ENCODE measurements at regions of chr2 and their contacts with region 1.

Region 1: DNA sequence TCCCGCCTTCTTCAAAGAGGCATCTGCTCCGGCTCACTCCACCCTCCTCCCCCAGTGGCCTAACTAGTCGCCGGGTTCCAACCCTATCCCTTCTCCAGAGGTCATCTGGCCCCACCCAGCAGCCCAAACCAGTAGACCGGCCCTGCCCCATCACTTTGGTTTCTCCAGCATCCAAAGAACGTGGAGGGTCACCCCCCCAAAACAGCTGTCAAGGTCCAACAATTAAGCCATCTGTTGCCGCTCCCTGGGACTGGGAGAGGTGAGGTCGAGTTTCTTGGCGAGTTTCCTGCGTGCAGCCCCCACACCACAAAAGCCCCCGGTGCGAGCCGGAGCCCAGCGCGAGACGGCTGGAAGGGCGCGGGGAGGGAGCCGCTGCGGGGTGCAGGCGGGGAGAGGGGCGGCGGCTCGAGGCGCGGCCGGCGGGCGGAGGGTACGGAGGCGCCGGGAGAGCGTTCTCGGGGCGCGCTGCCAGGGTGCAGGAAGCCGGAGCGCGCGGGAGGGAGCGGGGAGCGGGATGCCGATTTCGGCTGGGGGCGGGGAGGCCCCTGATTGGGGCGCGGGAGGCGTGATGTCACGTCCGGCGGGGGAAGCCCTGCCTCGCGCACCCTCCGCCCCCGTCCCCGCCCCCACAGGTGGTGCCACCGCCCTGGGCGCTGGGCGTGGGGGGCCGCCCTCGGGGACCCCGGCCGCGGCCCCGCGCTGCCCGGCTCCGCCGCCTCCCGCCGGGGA is 571 bp upstream of the GPC1 start:
- DNase-seq: peak; percentile 77 to 95 (median 88)
- H3K4me3 ChIP-seq: peak overlapping the region; percentile 44 to 89 (median 75)
- H3K27ac ChIP-seq: peak overlapping the region in 58 of 59 donors; percentile 41 to 93 (median 83)
- H3K27me3 ChIP-seq: no peaks in the 10 kb centered on the region
- CTCF ChIP-seq: peak in 3 of 56 donors; percentile 5 to 22 (median 12)

Region 2: GRCh38 chr2:240051697-240052096 is 383.2 kb before region 1 on chr2:
- intact Hi-C with region 1: loop called in 1 of 2 experiments (anchors 10 kb)
- DNase-seq: no peak
- H3K4me3 ChIP-seq: peak overlapping the region in 21 of 59 donors; percentile 0 to 48 (median 11)
- H3K27ac ChIP-seq: peak overlapping the region; percentile 43 to 99 (median 95)
- H3K27me3 ChIP-seq: peaks cover 0 to 9% (median 0%) of the 10 kb centered on the region in 45 donors
- CTCF ChIP-seq: peak in 8 of 56 donors; percentile 5 to 35 (median 18)

Region 3: GRCh38 chr2:240149943-240150784 is 284.7 kb before region 1 on chr2:
- intact Hi-C with region 1: loop called (anchors 5 kb)
- DNase-seq: peak in 6 of 10 donors; percentile 35 to 68 (median 51)
- H3K4me3 ChIP-seq: no peak overlapping the region
- H3K27ac ChIP-seq: no peak overlapping the region
- H3K27me3 ChIP-seq: peaks cover 0 to 6% (median 0%) of the 10 kb centered on the region in 45 donors
- CTCF ChIP-seq: peak; percentile 31 to 83 (median 72)

Region 4: DNA sequence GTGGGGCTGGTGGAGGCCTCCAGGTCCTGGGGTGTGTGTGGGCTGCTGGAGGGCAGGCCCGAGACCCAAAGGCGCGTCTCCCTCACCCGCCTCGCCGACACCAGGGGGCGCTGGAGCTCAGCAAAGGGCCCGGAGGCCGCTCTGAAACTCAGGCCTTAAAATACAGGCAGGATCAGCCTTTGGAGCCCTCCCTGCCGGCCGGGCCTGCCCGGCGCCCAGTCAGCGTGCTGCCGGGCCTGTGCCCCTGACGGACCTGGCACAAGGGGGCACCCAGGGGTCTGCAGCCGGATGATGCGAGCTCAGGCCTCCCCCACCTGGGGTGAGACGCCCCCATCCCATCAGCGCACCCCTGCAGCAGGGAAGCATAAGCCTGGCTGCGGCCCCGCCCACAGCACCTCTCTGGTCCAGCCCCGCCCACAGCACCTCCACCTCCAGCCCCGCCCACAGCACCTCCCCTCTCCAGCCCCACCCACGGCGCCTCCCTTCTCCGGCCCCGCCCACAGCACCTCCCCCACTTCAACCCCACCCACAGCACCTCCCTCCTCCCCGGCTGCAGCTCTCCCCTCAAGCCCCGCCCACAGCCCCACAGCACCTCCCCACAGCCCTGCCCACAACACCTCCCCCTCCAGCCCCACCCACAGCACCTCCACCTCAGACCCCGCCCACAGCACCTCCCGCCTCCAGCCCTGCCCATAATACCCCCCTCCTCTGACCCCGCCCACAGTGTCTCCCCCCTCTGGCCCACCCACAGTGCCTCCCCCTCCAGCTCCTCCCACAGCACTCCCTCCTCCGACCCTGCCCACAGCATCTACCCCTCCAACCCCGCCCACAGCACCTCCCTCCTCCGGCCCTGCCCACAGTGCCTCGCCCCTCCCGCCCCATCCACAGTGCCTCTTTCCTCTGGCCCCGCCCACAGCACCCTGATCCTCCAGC is 201.7 kb before region 1 on chr2:
- intact Hi-C with region 1: loop called (anchors 1 kb)
- DNase-seq: peak; percentile 65 to 87 (median 79)
- H3K4me3 ChIP-seq: peak overlapping the region in 42 of 59 donors; percentile 4 to 54 (median 37)
- H3K27ac ChIP-seq: peak overlapping the region in 26 of 59 donors; percentile 6 to 82 (median 45)
- H3K27me3 ChIP-seq: no peaks in the 10 kb centered on the region
- CTCF ChIP-seq: peak; percentile 77 to 98 (median 93)

Region 5: DNA sequence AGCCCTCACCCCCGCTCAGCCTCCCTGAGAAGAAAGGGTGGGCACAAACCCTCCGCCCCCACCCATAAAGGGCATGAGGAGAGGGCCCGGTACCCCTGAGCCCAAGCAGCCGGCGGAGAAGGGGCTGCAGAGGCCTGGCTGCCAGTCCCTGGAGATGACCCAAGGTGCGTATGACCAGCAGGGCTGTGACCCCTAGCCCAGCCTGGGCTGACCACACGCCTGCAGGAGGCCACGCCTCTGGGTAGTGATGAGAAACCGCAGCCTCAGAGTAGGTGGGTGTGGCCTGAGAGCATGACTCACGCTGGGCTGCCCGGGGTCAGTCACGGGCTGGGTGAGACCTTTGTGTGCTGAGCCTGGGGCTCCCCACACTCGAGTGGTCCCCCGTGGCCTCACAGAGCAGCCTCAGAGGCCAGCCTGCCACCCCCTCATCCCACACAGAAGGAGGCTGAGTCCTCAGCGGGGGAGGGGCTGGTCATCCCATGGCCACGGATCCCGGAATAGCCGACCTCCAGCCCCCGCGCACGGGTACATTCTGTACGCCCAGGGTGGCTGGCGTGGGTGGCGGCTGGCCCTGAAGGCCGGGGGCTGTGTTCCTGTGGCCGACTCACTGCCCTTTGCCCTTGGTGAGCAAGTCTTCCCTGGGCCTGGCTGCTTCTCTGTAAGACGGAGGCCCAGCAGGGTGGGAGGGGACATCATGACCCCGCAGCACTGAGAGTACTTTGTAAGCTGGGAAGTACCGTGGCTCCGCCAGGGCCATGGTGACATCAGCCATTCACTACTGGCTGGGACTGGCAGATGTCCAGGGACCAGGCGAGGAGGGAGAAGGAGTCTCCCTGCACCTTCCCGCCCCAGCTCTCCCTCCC is 183.7 kb before region 1 on chr2:
- intact Hi-C with region 1: loop called (anchors 5 kb)
- DNase-seq: peak; percentile 46 to 96 (median 92)
- H3K4me3 ChIP-seq: peak overlapping the region in 30 of 59 donors; percentile 0 to 51 (median 28)
- H3K27ac ChIP-seq: peak overlapping the region; percentile 72 to 99 (median 95)
- H3K27me3 ChIP-seq: no peaks in the 10 kb centered on the region
- CTCF ChIP-seq: peak in 7 of 56 donors; percentile 6 to 22 (median 12)

Region 6: GRCh38 chr2:240339996-240340761 is 94.7 kb before region 1 on chr2:
- intact Hi-C with region 1: loop called in 1 of 2 experiments (anchors 5 kb)
- DNase-seq: peak in 9 of 10 donors; percentile 79 to 88 (median 82)
- H3K4me3 ChIP-seq: peak overlapping the region in 5 of 59 donors; percentile 1 to 32 (median 5)
- H3K27ac ChIP-seq: peak overlapping the region in 58 of 59 donors; percentile 5 to 95 (median 80)
- H3K27me3 ChIP-seq: peaks cover 0 to 4% (median 0%) of the 10 kb centered on the region in 45 donors
- CTCF ChIP-seq: peak in 9 of 56 donors; percentile 11 to 23 (median 15)